CD4-positive, alpha-beta T cell (primary cell): ENCODE measurements at regions of chr21 and their contacts with region 1.

Region 1: DNA sequence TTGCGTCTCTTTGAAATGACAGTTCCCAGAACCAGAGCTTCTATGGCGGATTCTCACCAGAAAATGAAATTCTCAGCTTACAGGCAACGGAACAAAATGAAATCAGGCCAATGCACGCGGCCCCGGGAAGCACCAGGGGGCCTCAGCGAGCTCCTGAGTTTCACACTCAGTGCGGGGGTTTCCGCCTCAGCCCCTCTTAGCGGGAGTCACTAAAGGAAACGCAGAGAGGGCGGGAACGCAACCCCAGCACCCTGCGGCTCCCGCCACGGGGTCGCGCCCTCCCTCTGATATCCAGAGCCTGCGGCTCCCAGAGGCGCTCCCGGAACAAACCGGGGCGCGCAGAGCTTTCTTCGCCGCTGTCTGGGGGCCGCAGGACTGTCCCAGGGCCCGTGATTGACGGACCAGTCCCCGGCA is 7.9 kb upstream of the COL6A1 start:
- DNase-seq: peak; percentile 59 to 89 (median 72)
- ATAC-seq: peak; percentile 85
- H3K4me3 ChIP-seq: peak overlapping the region; percentile 70
- H3K4me3 Mint-ChIP-seq: peak overlapping the region; percentile 93
- H3K27ac ChIP-seq: no peak overlapping the region
- H3K27ac Mint-ChIP-seq: peak overlapping the region; percentile 30
- H3K4me1 ChIP-seq: peaks cover 49% of the 10 kb centered on the region
- H3K4me1 Mint-ChIP-seq: peaks cover 14% of the 10 kb centered on the region
- H3K27me3 ChIP-seq: peaks cover 48 to 51% of the 10 kb centered on the region in 2 experiments
- H3K27me3 Mint-ChIP-seq: peaks cover 30% of the 10 kb centered on the region
- CTCF ChIP-seq: peak; percentile 78

Region 2: DNA sequence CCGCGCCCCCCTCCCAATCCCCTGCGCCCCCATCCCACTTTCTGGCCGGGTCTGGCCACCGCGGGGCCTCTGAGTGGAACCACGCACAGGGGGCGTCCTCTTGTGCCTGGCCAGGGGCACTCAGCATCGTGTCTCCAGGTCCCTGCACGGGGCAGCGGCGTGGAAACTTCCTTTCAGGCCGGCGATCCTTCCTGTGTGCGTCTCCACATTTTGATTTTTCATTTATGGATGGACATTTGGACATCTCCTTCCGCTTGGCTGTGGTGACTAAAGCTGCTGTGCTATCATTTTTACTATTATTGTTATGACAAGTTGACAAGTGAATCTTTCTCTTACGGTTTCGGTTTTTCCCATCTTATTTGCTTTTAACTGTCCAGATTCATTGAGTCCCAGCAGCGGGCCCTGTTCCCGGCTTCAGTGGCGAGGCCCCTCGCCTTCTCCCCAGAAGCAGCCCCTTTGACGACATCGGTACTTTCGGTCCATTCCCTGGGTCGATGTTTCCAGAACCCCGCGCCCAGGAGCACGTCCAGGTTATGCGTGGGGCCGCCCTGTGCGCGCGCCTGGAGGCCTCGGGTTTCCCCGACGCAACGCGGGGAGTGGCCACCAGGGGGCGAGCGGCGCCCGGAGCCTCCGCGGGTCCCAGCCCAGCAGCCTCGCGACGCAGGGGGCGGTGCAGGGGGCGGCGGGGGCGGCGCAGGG is 419.0 kb before region 1 on chr21:
- CTCF ChIA-PET with region 1: no interaction called
- POLR2A ChIA-PET with region 1: no interaction called
- intact Hi-C with region 1: no loop called
- DNase-seq: peak; percentile 81 to 97 (median 91)
- ATAC-seq: peak; percentile 83
- H3K4me3 ChIP-seq: peak overlapping the region; percentile 67
- H3K4me3 Mint-ChIP-seq: peak overlapping the region; percentile 87
- H3K27ac ChIP-seq: no peak overlapping the region
- H3K27ac Mint-ChIP-seq: peak overlapping the region; percentile 89
- H3K4me1 ChIP-seq: peaks cover 47% of the 10 kb centered on the region
- H3K4me1 Mint-ChIP-seq: peaks cover 29% of the 10 kb centered on the region
- H3K27me3 ChIP-seq: no peaks in the 10 kb centered on the region
- H3K27me3 Mint-ChIP-seq: no peaks in the 10 kb centered on the region
- CTCF ChIP-seq: peak; percentile 72

Region 3: GRCh38 chr21:45698493-45699184 is 275.0 kb before region 1 on chr21:
- CTCF ChIA-PET with region 1: no interaction called
- POLR2A ChIA-PET with region 1: no interaction called
- intact Hi-C with region 1: no loop called
- DNase-seq: no peak
- ATAC-seq: no peak
- H3K4me3 ChIP-seq: no peak overlapping the region
- H3K4me3 Mint-ChIP-seq: no peak overlapping the region
- H3K27ac ChIP-seq: no peak overlapping the region
- H3K27ac Mint-ChIP-seq: peak overlapping the region; percentile 75
- H3K4me1 ChIP-seq: peaks cover 13% of the 10 kb centered on the region
- H3K4me1 Mint-ChIP-seq: peaks cover 21% of the 10 kb centered on the region
- H3K27me3 ChIP-seq: no peaks in the 10 kb centered on the region
- H3K27me3 Mint-ChIP-seq: no peaks in the 10 kb centered on the region
- CTCF ChIP-seq: no peak

Region 4: DNA sequence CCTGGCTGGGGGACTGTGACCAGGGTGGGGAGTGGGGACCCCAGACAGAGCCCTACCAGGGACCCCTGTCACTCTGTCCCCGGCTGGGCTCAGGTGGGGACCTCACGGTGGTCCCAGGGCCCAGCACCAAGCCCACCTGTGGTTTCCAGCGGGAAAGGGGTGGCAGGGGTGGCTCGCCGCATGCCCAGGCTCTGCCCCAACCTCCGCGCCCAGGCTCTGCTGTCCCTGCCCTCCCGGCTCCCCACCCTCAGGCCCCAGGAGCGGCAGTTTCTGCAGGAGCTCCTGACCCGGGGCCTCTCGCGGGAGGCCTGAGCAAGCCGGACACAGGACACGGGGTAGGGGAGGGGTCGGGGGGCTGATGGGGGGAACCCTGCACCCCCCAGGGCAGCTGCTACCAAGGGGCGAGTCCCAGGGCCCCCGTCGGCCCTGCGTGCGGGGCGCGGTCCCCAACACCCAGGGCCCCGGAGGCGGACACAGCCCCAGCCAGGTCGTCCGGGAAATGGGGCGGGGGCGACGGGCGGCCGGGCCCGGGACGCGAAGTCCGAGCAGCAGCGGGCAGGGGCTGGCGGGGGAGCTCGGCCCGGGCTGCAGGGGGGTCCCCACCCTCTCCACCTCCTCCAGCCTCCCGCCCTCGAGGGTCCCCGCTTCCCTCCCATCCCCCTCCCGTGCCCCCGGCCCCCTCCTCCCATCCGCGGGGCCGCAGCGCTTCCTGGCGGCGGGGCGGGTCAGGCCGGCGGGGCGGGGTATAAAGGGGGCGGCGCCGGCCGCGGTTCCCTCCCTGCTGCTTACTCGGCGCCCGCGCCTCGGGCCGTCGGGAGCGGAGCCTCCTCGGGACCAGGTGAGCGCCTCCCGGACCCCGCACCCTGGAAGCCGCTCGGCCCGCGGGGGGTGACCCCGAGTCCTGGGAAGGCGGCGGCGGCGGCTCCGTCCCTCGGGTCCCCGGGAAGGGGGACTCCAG is 123.9 kb after region 1 on chr21 and contains the start of gene COL6A2:
- CTCF ChIA-PET with region 1: interaction called, 3 read pairs
- POLR2A ChIA-PET with region 1: no interaction called
- intact Hi-C with region 1: loop called (anchors 2 to 10 kb)
- DNase-seq: peak in 13 of 14 experiments; percentile 26 to 72 (median 51)
- ATAC-seq: peak; percentile 90
- H3K4me3 ChIP-seq: peak within 1 kb of the TSS; percentile 41
- H3K4me3 Mint-ChIP-seq: peak within 1 kb of the TSS; percentile 76
- H3K27ac ChIP-seq: no peak within 1 kb of the TSS
- H3K27ac Mint-ChIP-seq: no peak within 1 kb of the TSS
- H3K4me1 ChIP-seq: peaks cover 34% of the 10 kb centered on the region
- H3K4me1 Mint-ChIP-seq: peaks cover 11% of the 10 kb centered on the region
- H3K27me3 ChIP-seq: peaks cover 6 to 14% of the 10 kb centered on the region in 2 experiments
- H3K27me3 Mint-ChIP-seq: peaks cover 25% of the 10 kb centered on the region
- CTCF ChIP-seq: no peak
- total RNA-seq, gene COL6A2: 24.1 to 26.4 TPM

Region 5: DNA sequence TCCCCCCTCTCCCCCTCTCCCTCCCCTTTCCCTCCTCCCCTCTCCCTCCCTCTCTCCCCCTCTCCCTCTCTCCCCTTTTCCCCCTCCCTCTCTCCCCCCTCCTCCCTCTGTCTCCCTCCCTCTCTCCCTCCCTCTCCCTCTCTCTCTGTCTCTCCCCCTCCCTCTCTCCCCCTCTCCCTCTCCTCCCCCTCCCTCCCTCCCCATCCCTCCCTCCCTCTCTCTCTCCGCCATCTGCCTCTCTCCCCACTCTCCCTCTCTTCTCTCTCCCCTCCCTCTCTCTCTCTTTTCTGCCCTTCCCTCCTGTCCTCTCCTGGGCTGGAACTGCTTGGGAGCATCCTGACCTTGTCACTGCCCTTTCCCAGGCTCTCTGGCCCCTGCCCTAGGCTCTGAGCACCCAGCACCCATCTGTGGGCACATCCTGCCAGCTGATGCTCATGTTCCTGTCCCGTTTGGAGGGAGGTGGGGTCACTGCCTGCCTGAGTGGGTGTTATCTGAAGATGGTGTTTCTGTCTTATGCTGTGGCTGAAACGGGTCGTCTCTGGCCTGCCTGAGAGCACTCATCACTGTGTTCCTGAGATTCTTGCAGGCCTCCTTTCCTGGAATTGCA is 170.9 kb after region 1 on chr21:
- CTCF ChIA-PET with region 1: interaction called, 3 read pairs
- POLR2A ChIA-PET with region 1: no interaction called
- intact Hi-C with region 1: loop called in 1 of 2 experiments (anchors 5 kb)
- DNase-seq: no peak
- ATAC-seq: no peak
- H3K4me3 ChIP-seq: no peak overlapping the region
- H3K4me3 Mint-ChIP-seq: no peak overlapping the region
- H3K27ac ChIP-seq: no peak overlapping the region
- H3K27ac Mint-ChIP-seq: no peak overlapping the region
- H3K4me1 ChIP-seq: peaks cover 12% of the 10 kb centered on the region
- H3K4me1 Mint-ChIP-seq: peaks cover 8% of the 10 kb centered on the region
- H3K27me3 ChIP-seq: no peaks in the 10 kb centered on the region
- H3K27me3 Mint-ChIP-seq: no peaks in the 10 kb centered on the region
- CTCF ChIP-seq: no peak

Region 6: GRCh38 chr21:46285761-46286496 is 312.3 kb after region 1 on chr21 and contains the start of gene YBEY:
- CTCF ChIA-PET with region 1: no interaction called
- POLR2A ChIA-PET with region 1: no interaction called
- intact Hi-C with region 1: loop called in 1 of 2 experiments (anchors 10 kb)
- DNase-seq: peak; percentile 68 to 92 (median 82)
- ATAC-seq: peak; percentile 80
- H3K4me3 ChIP-seq: peak within 1 kb of the TSS; percentile 84
- H3K4me3 Mint-ChIP-seq: peak within 1 kb of the TSS; percentile 98
- H3K27ac ChIP-seq: peak within 1 kb of the TSS; percentile 72 to 84
- H3K27ac Mint-ChIP-seq: peak within 1 kb of the TSS; percentile 86
- H3K4me1 ChIP-seq: peaks cover 49% of the 10 kb centered on the region
- H3K4me1 Mint-ChIP-seq: peaks cover 54% of the 10 kb centered on the region
- H3K27me3 ChIP-seq: no peaks in the 10 kb centered on the region
- H3K27me3 Mint-ChIP-seq: no peaks in the 10 kb centered on the region
- CTCF ChIP-seq: peak; percentile 41
- total RNA-seq, gene YBEY: 10.6 to 14.8 TPM